ENCODE measurements at regions of chr10 and their contacts with region 1.

Region 1: DNA sequence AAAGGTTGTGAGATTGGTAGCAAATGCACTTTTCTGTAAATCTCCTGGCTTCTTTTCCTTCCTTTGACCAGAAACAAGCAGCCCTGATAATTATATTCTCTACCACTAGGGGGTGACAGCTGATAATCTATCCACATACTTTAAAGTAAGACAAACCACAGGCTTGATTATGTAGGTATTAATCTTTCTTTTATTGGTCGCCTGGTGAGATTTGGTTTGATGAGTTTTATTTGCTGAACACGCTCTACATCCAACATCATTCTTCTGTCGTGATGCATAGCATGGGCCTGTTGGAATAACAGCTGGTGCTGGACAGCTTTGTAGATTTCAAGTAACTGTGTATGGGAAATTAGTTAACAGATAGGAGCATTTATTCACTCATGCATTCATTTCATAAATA is 63.5 kb downstream of the ZNF365 start:
- DNase-seq: peak; percentile 40 to 68 (median 55)
- H3K4me3 ChIP-seq: no peak overlapping the region
- H3K4me3 Mint-ChIP-seq: no peak overlapping the region
- H3K27ac ChIP-seq: no peak overlapping the region
- H3K27ac Mint-ChIP-seq: no peak overlapping the region
- H3K4me1 ChIP-seq: peaks cover 0 to 10% of the 10 kb centered on the region in 2 donors
- H3K4me1 Mint-ChIP-seq: peaks cover 11% of the 10 kb centered on the region
- H3K27me3 ChIP-seq: peaks cover 0 to 8% of the 10 kb centered on the region in 2 donors
- H3K27me3 Mint-ChIP-seq: peaks cover 3 to 4% (median 3%) of the 10 kb centered on the region in 3 donors
- CTCF ChIP-seq: peak; percentile 85

Region 2: DNA sequence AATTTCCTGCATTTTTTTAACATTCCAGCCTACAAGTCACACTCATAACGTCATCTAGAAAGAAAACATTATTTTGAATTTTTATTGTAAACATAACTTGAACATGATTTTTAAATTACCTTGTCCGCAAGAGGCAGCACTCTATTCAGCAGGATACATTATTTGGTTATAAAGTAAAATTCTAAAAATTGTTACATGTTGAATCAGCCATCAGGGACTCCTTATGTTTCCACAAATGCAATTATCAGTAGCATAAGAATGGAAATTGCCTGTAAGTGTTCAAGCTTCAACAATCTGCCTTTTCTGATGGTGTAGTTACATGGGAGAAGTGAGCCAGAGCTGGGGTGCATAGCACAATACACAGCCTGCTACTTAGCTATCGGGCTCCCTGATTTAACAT is 34.0 kb after region 1 on chr10:
- intact Hi-C with region 1: loop called in 1 of 2 experiments (anchors 5 kb)
- DNase-seq: no peak
- H3K4me3 ChIP-seq: no peak overlapping the region
- H3K4me3 Mint-ChIP-seq: no peak overlapping the region
- H3K27ac ChIP-seq: no peak overlapping the region
- H3K27ac Mint-ChIP-seq: no peak overlapping the region
- H3K4me1 ChIP-seq: peaks cover 11 to 12% of the 10 kb centered on the region in 2 donors
- H3K4me1 Mint-ChIP-seq: peaks cover 15% of the 10 kb centered on the region
- H3K27me3 ChIP-seq: peaks cover 0 to 2% of the 10 kb centered on the region in 2 donors
- H3K27me3 Mint-ChIP-seq: peaks cover 0 to 4% (median 0%) of the 10 kb centered on the region in 3 donors
- CTCF ChIP-seq: no peak

Region 3: DNA sequence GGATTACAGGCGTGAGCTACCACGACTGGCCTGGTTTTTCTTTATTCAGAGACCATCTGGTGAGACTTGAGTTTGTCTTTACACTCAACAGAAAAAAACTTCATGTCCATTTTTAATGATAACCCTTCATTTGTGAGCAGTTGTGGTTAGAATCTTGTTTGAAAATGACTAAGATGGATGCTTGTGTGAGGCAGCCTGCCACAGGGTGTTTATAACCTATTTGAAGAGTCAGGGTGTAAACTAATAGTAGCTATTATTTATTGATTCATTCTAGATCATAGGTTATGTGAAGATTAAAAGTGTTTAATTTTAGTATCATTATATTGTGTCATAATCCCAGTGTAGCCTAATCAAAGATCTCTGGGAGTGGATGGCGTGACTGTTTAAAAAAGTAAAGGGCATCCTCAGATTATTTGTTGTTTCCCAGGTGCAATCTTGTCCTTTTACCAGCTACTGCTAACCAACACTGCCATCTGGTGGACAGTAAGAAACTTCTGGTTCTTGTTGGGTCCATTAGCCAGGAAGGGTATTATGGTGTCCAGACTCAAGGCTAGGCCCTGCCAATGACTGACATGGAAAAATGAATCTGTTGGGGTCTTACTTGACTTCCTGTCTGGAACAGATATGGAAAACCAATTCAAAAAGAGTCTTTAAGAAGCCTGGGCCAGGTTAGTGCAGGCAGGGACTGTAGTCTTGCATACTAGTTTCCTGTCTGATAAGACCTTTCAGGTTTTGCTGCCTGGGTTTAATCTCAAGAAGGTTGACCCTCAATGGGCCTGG is 720.3 kb after region 1 on chr10:
- intact Hi-C with region 1: loop called (anchors 2 to 5 kb)
- DNase-seq: peak; percentile 65 to 81 (median 70)
- H3K4me3 ChIP-seq: no peak overlapping the region
- H3K4me3 Mint-ChIP-seq: no peak overlapping the region
- H3K27ac ChIP-seq: no peak overlapping the region
- H3K27ac Mint-ChIP-seq: peak overlapping the region in 1 of 7 donors; percentile 20
- H3K4me1 ChIP-seq: peaks cover 18 to 24% of the 10 kb centered on the region in 2 donors
- H3K4me1 Mint-ChIP-seq: peaks cover 20% of the 10 kb centered on the region
- H3K27me3 ChIP-seq: no peaks in the 10 kb centered on the region
- H3K27me3 Mint-ChIP-seq: peaks cover 0 to 2% (median 0%) of the 10 kb centered on the region in 3 donors
- CTCF ChIP-seq: peak; percentile 91